ENCODE measurements at regions of chrX and their contacts with region 1.

Region 1: DNA sequence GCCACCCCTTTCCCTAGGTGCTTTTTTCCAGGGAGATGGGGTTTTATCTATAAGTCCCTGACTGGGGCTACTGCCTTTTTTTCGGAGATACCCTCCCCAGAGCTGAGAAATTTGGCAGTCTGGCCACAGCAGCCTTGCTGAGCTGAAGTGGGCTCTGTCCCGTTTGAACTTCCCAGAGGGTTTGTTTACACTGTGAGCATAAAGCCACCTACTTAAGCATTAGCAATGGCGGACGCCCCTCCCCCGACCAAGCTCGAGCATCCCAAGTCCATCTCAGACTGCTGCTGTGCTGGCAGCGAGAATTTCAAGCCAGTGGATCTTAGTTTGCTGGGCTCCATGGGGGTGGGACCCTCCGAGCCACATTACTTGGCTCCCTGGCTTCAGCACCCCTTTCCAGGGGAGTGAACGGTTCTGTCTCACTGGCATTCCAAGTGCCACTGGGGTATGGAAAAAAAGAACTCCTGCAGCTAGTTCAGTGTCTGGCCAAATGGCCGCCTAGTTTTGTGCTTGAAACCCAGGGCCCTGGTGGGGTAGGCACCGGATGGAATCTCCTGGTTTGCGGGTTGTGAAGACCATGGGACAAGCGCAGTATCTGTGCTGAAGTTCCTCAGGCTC is 456.4 kb upstream of the HTR2C start:
- DNase-seq: no peak
- H3K4me3 ChIP-seq: no peak overlapping the region
- H3K27ac ChIP-seq: no peak overlapping the region
- H3K4me1 ChIP-seq: no peaks in the 10 kb centered on the region
- H3K27me3 ChIP-seq: no peaks in the 10 kb centered on the region
- CTCF ChIP-seq: no peak

Region 2: GRCh38 chrX:114181195-114181594 is 53.7 kb after region 1 on chrX:
- CTCF ChIA-PET with region 1: interaction called, 21 read pairs
- POLR2A ChIA-PET with region 1: no interaction called
- intact Hi-C with region 1: no loop called
- DNase-seq: no peak
- H3K4me3 ChIP-seq: no peak overlapping the region
- H3K27ac ChIP-seq: no peak overlapping the region
- H3K4me1 ChIP-seq: no peaks in the 10 kb centered on the region
- H3K27me3 ChIP-seq: no peaks in the 10 kb centered on the region
- CTCF ChIP-seq: no peak